Mammary epithelial cell (primary cell): ENCODE measurements at regions of chr16 and their contacts with region 1.

Region 1: GRCh38 chr16:69339289-69340108 is at the starts of genes COG8 and NIP7:
- DNase-seq: peak; percentile 98
- H3K4me3 ChIP-seq: peak within 1 kb of the TSS; percentile 85 to 92 (median 86)
- H3K27ac ChIP-seq: peak within 1 kb of the TSS; percentile 82
- H3K4me1 ChIP-seq: peaks cover 17% of the 10 kb centered on the region
- H3K27me3 ChIP-seq: no peaks in the 10 kb centered on the region
- CTCF ChIP-seq: peak; percentile 78 to 85
- total RNA-seq, gene COG8: 24.3 to 32.7 TPM
- total RNA-seq, gene NIP7: 24.8 to 43.2 TPM

Region 2: GRCh38 chr16:68470461-68471150 is 868.9 kb before region 1 on chr16:
- CTCF ChIA-PET with region 1: no interaction called
- dilution Hi-C with region 1: no loop called
- in situ Hi-C with region 1: no loop called
- intact Hi-C with region 1: no loop called
- DNase-seq: no peak
- H3K4me3 ChIP-seq: no peak overlapping the region
- H3K27ac ChIP-seq: no peak overlapping the region
- H3K4me1 ChIP-seq: peaks cover 6% of the 10 kb centered on the region
- H3K27me3 ChIP-seq: peaks cover 5% of the 10 kb centered on the region
- CTCF ChIP-seq: no peak

Region 3: DNA sequence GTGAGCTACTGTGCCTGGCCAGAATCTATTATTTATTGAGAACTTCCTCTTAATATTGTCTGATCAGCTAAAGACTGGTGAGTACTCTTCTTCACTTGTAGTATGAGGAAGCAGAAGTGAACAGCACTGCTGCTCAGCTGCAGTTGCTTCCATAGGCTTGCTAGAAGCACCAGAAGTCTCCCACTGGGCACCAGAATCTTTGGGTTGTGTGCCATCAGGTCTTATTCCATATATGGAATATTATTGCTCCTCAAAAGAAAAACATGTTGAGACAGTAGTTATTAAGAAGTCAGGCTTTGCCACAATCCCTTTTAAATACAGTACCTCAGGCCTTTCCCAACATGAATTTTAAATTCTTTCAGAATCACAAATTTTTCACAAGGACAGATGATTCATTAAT is 135.3 kb before region 1 on chr16:
- CTCF ChIA-PET with region 1: interaction called, 3 read pairs
- dilution Hi-C with region 1: no loop called
- in situ Hi-C with region 1: no loop called
- intact Hi-C with region 1: loop called (anchors 1 kb)
- DNase-seq: no peak
- H3K4me3 ChIP-seq: no peak overlapping the region
- H3K27ac ChIP-seq: peak overlapping the region; percentile 22
- H3K4me1 ChIP-seq: peaks cover 28% of the 10 kb centered on the region
- H3K27me3 ChIP-seq: no peaks in the 10 kb centered on the region
- CTCF ChIP-seq: no peak

Region 4: GRCh38 chr16:69310653-69311532 is 28.6 kb before region 1 on chr16 and contains the start of gene VPS4A:
- CTCF ChIA-PET with region 1: no interaction called
- dilution Hi-C with region 1: no loop called
- in situ Hi-C with region 1: no loop called
- intact Hi-C with region 1: loop called (anchors 1 kb)
- DNase-seq: peak; percentile 95
- H3K4me3 ChIP-seq: peak within 1 kb of the TSS; percentile 83 to 94 (median 85)
- H3K27ac ChIP-seq: peak within 1 kb of the TSS; percentile 52
- H3K4me1 ChIP-seq: peaks cover 5% of the 10 kb centered on the region
- H3K27me3 ChIP-seq: no peaks in the 10 kb centered on the region
- CTCF ChIP-seq: peak; percentile 82
- total RNA-seq, gene VPS4A: 32.0 to 38.4 TPM

Region 5: GRCh38 chr16:69371564-69371963 is 32.1 kb after region 1 on chr16:
- CTCF ChIA-PET with region 1: no interaction called
- dilution Hi-C with region 1: no loop called
- in situ Hi-C with region 1: no loop called
- intact Hi-C with region 1: no loop called
- DNase-seq: no peak
- H3K4me3 ChIP-seq: no peak overlapping the region
- H3K27ac ChIP-seq: no peak overlapping the region
- H3K4me1 ChIP-seq: no peaks in the 10 kb centered on the region
- H3K27me3 ChIP-seq: no peaks in the 10 kb centered on the region
- CTCF ChIP-seq: no peak

Region 6: DNA sequence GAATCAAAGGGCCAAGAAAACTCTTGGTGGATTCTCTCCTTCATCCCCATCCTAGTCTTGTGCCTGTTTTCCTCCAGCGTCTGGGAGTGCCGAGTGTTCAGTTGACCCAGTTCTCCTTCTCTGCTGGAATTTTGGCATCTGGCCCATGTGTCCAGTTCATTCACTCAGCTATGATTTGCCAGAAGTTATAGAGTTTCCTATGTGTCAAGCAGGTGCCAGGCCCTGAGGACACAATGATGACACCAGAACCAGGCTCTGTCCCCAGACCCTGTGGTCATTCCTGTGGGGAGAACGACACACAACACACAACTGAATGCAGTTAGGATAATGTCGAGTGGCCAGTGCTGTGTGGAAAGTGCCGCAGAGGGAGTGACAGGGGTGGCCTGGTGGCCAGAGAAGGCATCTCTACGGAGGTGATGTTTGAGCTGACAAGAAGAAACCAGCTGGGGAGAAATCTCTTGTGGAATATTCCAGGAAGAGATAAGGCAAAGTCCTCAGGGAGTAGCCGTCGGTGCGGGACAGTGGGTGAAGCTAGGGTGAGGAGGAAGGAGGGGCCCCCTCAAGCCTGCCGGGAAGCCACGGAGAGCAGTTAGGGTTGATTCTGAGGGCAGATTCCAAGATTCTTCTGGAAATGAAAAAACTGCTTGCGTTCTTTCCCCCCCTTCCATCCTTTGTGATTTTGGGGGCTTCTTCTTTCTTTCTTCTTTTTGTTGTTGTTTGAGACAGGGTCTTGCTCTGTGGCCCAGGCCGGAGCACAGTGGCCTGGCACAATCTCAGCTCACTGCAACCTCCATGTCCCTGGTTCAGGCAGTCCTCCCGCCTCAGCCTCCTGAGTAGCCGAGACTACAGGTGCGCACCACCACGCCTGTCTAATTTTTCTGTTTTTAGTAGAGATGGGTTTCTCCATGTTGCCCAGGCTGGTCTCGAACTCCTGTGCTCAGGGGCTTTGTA is 1271.0 kb after region 1 on chr16:
- CTCF ChIA-PET with region 1: no interaction called
- dilution Hi-C with region 1: no loop called
- in situ Hi-C with region 1: no loop called
- intact Hi-C with region 1: no loop called
- DNase-seq: no peak
- H3K4me3 ChIP-seq: no peak overlapping the region
- H3K27ac ChIP-seq: no peak overlapping the region
- H3K4me1 ChIP-seq: peaks cover 7% of the 10 kb centered on the region
- H3K27me3 ChIP-seq: no peaks in the 10 kb centered on the region
- CTCF ChIP-seq: no peak